Panc1 (cell line): ENCODE measurements at regions of chr6 and their contacts with region 1.

Region 1: DNA sequence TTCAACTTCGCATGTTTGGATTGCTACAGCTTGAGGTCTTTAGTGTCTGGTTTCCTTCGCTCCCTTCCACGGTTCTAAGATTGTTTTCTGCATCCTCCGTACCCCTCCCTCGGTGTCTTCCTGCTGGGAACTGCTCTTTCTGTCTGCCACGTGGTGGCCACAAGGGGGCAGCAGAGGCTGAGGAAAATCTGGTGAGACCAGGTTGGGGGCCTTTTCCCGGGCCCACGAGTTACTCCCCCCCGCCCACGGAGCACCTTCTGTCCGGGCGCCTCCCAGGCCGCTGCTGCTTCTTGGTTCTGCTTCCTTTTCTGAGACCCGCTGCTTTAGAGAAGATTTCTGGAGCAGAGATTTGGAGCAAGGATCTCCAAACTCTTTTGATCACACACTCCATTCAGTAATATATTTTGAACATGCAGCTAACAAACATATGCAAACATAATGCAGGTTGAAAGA is 21.1 kb upstream of the NOTCH4 start:
- DNase-seq: no peak
- ATAC-seq: peak; percentile 94
- H3K4me3 ChIP-seq: no peak overlapping the region
- H3K27ac ChIP-seq: no peak overlapping the region
- H3K4me1 ChIP-seq: no peaks in the 10 kb centered on the region
- H3K27me3 ChIP-seq: no peaks in the 10 kb centered on the region
- CTCF ChIP-seq: peak; percentile 95

Region 2: DNA sequence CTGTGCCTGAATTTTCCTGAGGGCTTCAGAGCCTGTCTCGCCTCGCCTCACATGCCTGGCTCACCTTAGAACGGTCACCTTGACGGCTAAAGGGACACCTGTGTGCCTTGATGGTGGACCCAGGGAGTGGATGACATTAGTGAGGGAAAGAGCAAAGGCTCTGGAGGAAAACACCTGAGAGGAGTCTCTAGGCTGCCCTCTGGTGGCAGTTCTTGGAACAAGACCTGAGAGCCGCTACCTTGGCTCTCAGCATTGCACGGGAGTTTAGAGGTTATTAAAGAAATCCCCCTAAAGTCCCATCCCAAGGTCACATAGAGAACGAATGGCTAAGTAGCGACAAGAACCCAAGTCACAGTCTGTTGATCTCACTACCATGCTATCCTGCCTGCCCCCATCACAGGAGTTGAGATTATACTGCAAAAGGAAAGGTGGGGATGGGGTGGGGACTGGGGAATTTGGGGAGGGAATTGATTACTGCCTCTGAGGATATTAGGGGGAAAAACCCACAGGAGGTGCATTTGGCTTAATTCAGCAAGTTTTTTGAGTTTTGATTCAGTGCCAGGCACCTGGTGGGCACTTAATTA is 1116.8 kb before region 1 on chr6:
- CTCF ChIA-PET with region 1: no interaction called
- POLR2A ChIA-PET with region 1: no interaction called
- in situ Hi-C with region 1: no loop called
- intact Hi-C with region 1: no loop called
- DNase-seq: no peak
- ATAC-seq: peak; percentile 65; the same call in 1 of the 2 replicates
- H3K4me3 ChIP-seq: no peak overlapping the region
- H3K27ac ChIP-seq: no peak overlapping the region
- H3K4me1 ChIP-seq: peaks cover 9% of the 10 kb centered on the region
- H3K27me3 ChIP-seq: peaks cover 2% of the 10 kb centered on the region; the same call in 1 of the 2 replicates
- CTCF ChIP-seq: peak; percentile 95

Region 3: DNA sequence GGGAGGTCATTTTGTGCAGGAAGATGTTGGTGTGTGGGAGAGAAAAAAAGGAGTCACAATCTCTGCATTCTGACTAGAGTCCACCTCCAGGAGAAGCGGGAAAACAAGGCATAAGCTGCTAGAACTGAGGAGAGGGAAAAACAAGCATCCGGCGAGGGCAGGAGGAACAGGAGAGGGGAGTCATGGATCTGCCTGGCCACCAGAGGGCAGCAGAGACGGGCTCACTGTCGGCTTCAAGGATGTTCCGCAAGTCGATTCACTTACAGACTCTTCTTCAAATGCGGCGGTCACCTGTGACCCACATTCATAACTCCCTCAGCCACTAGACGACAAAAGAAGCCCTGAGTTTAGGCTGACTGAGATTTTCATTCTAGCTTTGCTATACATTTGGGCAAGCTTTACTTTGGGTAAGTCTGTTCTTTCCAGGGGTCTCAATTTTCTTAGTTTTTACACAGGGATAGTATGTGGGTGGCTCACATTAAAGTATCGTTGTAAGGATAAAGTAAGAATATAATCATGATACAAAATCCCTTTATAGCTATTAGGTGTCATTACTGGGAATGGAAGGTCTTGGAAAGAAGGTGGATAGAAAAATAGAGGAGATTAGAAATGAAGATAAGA is 168.6 kb after region 1 on chr6:
- CTCF ChIA-PET with region 1: no interaction called
- POLR2A ChIA-PET with region 1: no interaction called
- in situ Hi-C with region 1: no loop called
- intact Hi-C with region 1: loop called (anchors 1 kb)
- DNase-seq: peak; percentile 69
- ATAC-seq: peak; percentile 82
- H3K4me3 ChIP-seq: no peak overlapping the region
- H3K27ac ChIP-seq: no peak overlapping the region
- H3K4me1 ChIP-seq: peaks cover 3% of the 10 kb centered on the region; the same call in 1 of the 2 replicates
- H3K27me3 ChIP-seq: peaks cover 35% of the 10 kb centered on the region
- CTCF ChIP-seq: peak; percentile 96

Region 4: DNA sequence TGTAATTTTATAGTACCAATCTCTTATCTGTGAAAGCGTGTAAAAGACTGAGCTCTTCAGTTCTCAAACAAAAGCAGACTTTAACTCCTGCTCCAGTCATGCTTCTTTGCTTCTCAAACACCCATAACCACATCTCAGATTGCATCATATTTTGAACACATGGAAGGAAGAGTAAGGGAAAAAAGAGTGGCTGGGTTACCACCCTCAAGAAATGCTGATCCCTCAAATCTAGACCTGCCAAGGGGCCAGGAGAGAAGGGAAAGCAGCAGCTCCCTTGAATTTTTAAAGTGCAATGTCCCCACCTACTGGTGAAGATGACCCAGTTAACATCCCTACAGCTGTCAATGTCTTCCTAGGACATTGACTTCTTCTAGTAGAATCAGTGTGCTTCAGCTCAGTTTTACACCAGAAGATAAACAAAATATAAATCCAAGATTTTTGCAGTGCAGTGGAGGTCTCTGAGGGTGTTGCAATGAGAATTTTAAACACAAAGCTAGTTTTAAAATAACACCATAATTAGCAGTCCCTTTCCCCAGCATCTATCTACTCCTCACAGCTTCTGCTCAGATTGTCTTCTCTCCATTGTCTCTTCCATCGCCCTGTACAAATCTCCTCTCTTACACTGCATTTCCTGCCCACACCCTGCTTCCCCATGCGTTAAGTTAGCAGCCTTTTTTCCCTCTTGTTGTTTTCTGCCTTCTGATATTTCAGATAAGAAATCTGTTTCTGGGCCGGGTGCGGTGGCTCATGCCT is 541.0 kb after region 1 on chr6:
- CTCF ChIA-PET with region 1: no interaction called
- POLR2A ChIA-PET with region 1: no interaction called
- in situ Hi-C with region 1: no loop called
- intact Hi-C with region 1: loop called (anchors 10 kb)
- DNase-seq: peak; percentile 24
- ATAC-seq: peak; percentile 95
- H3K4me3 ChIP-seq: no peak overlapping the region
- H3K27ac ChIP-seq: no peak overlapping the region
- H3K4me1 ChIP-seq: no peaks in the 10 kb centered on the region
- H3K27me3 ChIP-seq: peaks cover 13% of the 10 kb centered on the region
- CTCF ChIP-seq: peak; percentile 74